ENCODE measurements at regions of chr15 and their contacts with region 1.

Region 1: DNA sequence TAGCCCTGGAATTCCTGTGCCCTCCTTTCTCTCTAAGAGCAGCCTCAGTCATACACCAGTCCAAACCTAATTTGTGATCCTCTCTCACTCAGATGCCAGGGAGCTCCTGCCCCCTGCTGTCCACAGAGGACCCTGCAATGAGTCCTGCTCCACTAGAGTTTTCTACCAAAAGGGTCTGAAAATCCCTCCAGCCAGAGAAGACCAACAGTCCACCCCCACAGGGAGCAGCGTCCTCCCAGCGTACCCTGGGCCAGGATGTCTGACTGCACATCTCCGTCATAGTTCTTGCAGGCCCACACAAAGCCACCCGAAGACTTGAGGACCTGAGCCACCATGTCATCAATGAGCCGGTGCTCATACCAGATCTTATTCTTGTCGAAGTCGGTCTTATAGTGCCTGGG is 15.4 kb downstream of the IDH2 start:
- DNase-seq: peak; percentile 75
- ATAC-seq: peak; percentile 79
- H3K4me3 Mint-ChIP-seq: no peak overlapping the region
- H3K27ac Mint-ChIP-seq: peak overlapping the region; percentile 75
- H3K4me1 Mint-ChIP-seq: peaks cover 6% of the 10 kb centered on the region
- H3K27me3 Mint-ChIP-seq: no peaks in the 10 kb centered on the region

Region 2: DNA sequence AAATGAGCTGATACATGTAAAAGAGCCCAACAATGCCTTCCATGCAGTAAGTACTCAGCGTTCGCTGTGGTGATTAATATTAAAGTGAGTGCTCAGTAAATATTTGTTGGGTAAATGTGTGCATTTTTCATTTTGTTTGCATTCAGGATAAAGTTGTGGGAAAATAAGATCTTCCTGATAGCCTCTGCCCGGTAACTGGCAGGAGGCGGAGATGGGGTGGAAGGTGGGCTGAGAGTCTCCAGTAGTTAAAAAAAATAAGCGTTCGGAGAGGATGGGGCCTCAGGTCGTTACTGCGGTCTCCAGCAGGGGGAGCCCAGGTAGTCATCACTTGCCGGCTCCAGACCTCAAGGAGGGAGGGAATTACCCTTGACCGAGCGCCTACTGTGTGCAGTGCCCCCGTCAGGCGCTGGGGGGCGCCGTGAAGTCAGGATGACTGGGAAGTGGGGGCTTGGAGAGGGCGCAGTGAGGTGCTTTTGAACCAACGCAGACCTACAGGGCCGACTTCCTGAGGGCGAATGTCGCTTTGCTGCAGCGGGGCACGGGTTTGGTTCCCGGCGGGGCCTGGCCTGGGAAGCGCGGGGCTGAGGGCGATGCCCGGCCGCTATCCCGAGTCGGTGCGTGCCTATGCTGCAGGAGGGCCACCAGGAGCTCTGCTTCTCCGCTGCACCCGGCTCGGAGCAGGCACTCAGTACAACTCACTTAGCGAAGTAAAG is 670.6 kb before region 1 on chr15:
- CTCF ChIA-PET with region 1: no interaction called
- POLR2A ChIA-PET with region 1: no interaction called
- intact Hi-C with region 1: no loop called
- DNase-seq: peak; percentile 93
- ATAC-seq: peak; percentile 92
- H3K4me3 Mint-ChIP-seq: no peak overlapping the region
- H3K27ac Mint-ChIP-seq: no peak overlapping the region
- H3K4me1 Mint-ChIP-seq: peaks cover 10% of the 10 kb centered on the region
- H3K27me3 Mint-ChIP-seq: peaks cover 75% of the 10 kb centered on the region

Region 3: GRCh38 chr15:89760303-89761008 is 326.4 kb before region 1 on chr15:
- CTCF ChIA-PET with region 1: interaction called, 5 read pairs
- POLR2A ChIA-PET with region 1: no interaction called
- intact Hi-C with region 1: loop called (anchors 1 to 5 kb)
- DNase-seq: peak; percentile 85
- ATAC-seq: peak; percentile 88
- H3K4me3 Mint-ChIP-seq: no peak overlapping the region
- H3K27ac Mint-ChIP-seq: no peak overlapping the region
- H3K4me1 Mint-ChIP-seq: no peaks in the 10 kb centered on the region
- H3K27me3 Mint-ChIP-seq: peaks cover 6% of the 10 kb centered on the region

Region 4: DNA sequence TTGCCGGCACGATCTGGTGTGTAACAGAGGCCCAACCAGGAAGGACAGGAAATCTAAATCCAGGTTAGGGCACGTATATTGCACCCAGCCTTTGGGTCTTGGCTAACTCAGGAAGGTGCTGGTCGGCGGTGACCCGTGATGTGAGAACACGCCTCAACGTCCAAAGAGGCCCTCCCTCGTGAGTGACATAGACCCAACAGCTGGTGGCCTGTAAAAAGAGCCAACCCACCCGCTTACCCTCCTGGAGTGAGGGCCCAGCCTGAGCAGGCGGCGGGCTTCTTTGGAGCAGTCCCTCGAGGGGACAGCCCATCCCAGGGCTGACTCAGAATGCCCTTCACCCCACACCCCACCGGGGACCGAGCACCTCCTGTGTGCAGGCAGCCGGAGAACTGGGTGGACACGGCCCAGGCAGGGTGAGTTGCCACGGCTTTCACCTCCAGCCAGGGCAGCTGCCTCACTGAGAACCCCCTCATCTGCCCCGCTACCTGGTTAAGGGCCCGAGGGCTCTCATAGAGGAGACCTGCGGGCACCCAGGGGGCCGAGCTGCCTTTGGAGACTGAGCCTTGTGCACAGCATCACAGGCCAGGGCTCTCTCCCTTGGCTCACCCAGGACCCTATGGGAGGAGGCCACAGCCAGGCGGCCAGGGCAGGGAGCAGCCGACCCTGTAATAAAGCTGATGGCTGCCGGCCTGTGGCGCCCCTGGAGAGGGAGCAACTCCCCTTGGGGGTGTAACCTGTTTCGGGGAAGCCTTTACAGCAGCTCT is 43.9 kb before region 1 on chr15:
- CTCF ChIA-PET with region 1: no interaction called
- POLR2A ChIA-PET with region 1: no interaction called
- intact Hi-C with region 1: no loop called
- DNase-seq: no peak
- ATAC-seq: no peak
- H3K4me3 Mint-ChIP-seq: no peak overlapping the region
- H3K27ac Mint-ChIP-seq: no peak overlapping the region
- H3K4me1 Mint-ChIP-seq: peaks cover 44% of the 10 kb centered on the region
- H3K27me3 Mint-ChIP-seq: no peaks in the 10 kb centered on the region

Measured in activated CD4-positive, alpha-beta T cell treated with anti-CD3 and anti-CD28 coated beads for 36 hours (primary cell).